ENCODE measurements at regions of chr3 and their contacts with region 1.

Region 1: GRCh38 chr3:152322756-152323155 is 54.0 kb downstream of the MBNL1 start:
- DNase-seq: no peak
- ATAC-seq: no peak
- H3K4me3 ChIP-seq: no peak overlapping the region
- H3K27ac ChIP-seq: no peak overlapping the region
- H3K4me1 ChIP-seq: peaks cover 4% of the 10 kb centered on the region
- H3K27me3 ChIP-seq: no peaks in the 10 kb centered on the region

Region 2: GRCh38 chr3:152268555-152269425 is 54.0 kb before region 1 on chr3 and contains the start of gene MBNL1:
- intact Hi-C with region 1: loop called in 2 of 4 experiments (anchors 10 kb)
- DNase-seq: peak; percentile 82 to 92 (median 91)
- ATAC-seq: peak; percentile 84 to 88
- H3K4me3 ChIP-seq: peak within 1 kb of the TSS; percentile 70
- H3K27ac ChIP-seq: peak within 1 kb of the TSS; percentile 88
- H3K4me1 ChIP-seq: peaks cover 7% of the 10 kb centered on the region
- H3K27me3 ChIP-seq: no peaks in the 10 kb centered on the region
- total RNA-seq, gene MBNL1: 142 to 160 (median 154) TPM

Measured in right cardiac atrium (tissue), 5 donors.